ENCODE measurements at regions of chr7 and their contacts with region 1.

Region 1: DNA sequence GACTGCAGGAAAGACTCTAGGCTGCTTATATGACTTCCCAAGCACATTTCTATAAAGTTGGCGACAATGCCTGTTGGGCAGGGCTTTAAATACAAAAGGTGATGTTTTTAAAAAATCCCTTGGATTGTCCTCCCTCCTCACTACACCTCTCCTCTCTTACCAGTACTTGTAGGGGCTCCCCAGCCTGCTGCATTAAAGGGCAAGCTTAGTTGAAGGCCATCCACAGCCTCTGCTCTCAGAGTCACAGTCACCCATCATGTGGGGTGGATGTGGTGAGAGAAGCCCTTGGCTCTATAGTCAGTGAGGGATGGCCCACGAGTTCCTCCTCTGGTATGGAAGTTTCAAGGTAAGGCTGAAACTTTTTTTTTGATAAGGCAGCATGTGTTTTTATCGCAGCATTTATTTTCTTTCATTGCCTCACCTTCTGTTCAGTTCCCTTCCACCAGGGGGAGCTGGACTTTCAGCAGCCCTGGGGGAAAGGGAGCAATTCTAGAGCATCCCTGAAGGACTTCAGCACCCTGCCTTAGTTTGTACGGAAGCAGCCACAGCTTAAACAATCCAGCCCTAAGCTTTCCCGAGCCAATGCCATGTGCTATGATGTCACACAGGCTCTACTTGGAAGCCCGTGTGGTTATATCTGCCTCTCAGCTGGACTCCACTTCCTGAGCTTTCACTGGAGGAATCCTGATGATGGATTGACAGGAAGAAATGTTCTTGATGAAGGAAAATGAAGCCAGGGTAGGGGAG is 131.9 kb downstream of the CALCR start:
- DNase-seq: peak; percentile 54
- ATAC-seq: peak; percentile 66
- H3K4me3 Mint-ChIP-seq: no peak overlapping the region
- H3K27ac Mint-ChIP-seq: no peak overlapping the region
- H3K4me1 Mint-ChIP-seq: no peaks in the 10 kb centered on the region
- H3K27me3 Mint-ChIP-seq: peaks cover 1% of the 10 kb centered on the region
- CTCF ChIP-seq: peak; percentile 69

Region 2: DNA sequence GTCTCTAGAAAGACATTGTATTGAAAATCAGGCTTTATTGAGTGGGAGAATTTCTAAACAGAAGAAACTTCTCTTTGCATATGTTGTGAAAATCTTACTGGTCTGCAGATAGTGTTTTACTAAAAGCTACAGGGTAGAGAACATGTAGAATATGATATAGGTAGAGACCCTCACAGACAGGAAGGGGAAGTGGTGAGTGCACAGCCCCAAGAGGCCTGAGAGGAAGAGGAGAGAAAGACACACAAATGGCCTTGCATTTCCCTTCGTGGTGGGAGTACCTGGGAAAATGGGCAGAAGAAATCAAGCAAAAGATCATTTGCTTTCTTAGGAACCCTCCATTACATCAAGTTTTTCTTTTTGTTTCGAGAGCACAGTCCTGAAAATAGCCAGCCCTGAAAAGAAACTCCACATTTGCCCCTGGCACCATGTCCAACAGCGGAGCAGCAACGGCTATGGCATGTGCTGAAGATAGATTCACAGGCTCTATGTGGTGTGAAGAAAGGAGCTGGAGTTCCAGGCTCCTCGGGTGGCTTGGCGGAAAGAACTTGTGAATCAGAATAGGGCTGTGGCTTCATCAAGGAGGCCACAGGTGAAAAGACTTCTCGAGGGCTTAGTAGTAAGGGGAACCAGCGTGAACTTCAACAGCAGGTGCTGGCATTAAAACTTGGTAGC is 11.6 kb before region 1 on chr7:
- CTCF ChIA-PET with region 1: interaction called, 13 read pairs
- POLR2A ChIA-PET with region 1: no interaction called
- intact Hi-C with region 1: no loop called
- DNase-seq: peak; percentile 4
- ATAC-seq: peak; percentile 68
- H3K4me3 Mint-ChIP-seq: no peak overlapping the region
- H3K27ac Mint-ChIP-seq: peak overlapping the region; percentile 60
- H3K4me1 Mint-ChIP-seq: peaks cover 24% of the 10 kb centered on the region
- H3K27me3 Mint-ChIP-seq: no peaks in the 10 kb centered on the region
- CTCF ChIP-seq: no peak

Measured in activated CD8-positive, alpha-beta T cell treated with anti-CD3 and anti-CD28 coated beads for 36 hours (primary cell).